Activated naive CD4-positive, alpha-beta T cell treated with anti-CD3 and anti-CD28 coated beads for 36 hours (primary cell): ENCODE measurements at regions of chr2 and their contacts with region 1.

Region 1: GRCh38 chr2:112701052-112701451 is 19.8 kb upstream of the NT5DC4 start:
- DNase-seq: no peak
- H3K4me3 Mint-ChIP-seq: no peak overlapping the region
- H3K27ac Mint-ChIP-seq: no peak overlapping the region
- H3K4me1 Mint-ChIP-seq: peaks cover 2% of the 10 kb centered on the region
- H3K27me3 Mint-ChIP-seq: peaks cover 3% of the 10 kb centered on the region

Region 2: DNA sequence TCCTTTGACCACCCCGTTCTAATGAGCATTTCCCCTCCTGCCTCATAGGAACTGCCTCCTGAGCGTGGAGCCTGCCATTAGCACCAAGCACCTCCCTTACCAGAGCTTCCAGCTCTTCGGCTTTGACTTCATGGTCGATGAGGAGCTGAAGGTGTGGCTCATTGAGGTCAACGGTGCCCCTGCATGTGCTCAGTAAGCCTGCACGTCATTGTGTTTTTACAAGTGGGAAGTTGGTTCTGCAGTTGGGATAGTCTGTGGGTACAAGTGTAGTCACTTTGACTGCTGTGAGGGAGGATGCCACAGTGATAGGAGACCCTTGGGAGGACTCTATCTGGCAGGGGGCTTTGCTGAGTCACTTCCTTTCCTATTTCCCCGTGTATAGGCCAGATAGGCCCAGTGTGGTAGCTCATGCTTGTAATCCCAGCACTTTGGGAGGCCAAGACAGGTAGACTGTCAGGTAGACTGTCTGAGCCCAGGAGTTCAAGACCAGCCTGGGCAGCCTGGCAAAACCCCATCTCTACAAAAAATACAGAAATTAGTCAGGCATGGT is 180.7 kb before region 1 on chr2:
- CTCF ChIA-PET with region 1: no interaction called
- intact Hi-C with region 1: loop called (anchors 5 kb)
- DNase-seq: no peak
- H3K4me3 Mint-ChIP-seq: no peak overlapping the region
- H3K27ac Mint-ChIP-seq: no peak overlapping the region
- H3K4me1 Mint-ChIP-seq: no peaks in the 10 kb centered on the region
- H3K27me3 Mint-ChIP-seq: no peaks in the 10 kb centered on the region

Region 3: DNA sequence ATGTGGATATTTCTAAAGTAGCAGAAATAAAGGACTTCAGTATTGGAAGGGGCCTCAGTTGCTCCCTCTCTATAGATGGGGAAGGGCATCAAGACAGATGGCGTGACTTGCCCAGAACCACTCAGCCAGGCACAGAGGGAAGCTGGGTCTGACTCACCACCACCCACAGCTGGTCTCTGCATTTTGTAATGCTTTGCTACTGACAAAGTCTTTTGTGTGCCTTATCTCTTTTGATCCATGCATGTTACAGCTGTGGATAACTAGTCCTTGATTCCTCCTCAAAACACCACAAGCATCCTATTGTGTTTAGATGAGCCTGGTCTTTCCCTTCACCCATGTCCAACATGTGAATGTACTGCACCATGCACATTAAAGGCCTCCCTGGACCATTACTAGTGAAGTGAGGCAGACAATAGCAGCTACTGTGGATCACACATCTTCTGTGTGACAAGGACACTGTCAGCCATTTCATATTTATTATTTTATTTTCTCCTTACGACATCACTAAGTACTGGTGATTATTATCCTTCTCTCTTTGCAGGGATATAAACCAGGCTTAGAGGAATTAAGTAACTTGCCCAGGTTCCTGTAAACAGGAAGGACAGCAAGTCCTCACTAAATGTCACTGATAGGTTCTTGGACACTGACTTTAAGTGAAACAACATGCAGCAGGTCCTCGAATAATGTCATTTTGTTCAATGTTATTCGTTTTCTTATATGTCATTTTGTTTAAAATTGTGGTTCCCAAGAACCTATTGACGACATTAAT is 180.3 kb after region 1 on chr2:
- CTCF ChIA-PET with region 1: no interaction called
- intact Hi-C with region 1: no loop called
- DNase-seq: peak; percentile 31
- H3K4me3 Mint-ChIP-seq: no peak overlapping the region
- H3K27ac Mint-ChIP-seq: no peak overlapping the region
- H3K4me1 Mint-ChIP-seq: peaks cover 13% of the 10 kb centered on the region
- H3K27me3 Mint-ChIP-seq: no peaks in the 10 kb centered on the region